Activated T-helper 2 cell treated with anti-CD3 and anti-CD28 coated beads, Interferon-gamma antibody, Interleukin-2, Interleukin-4, amounts not matched to agents 10 μg/mL and 5 μg/mL and 100 μg/mL, durations not matched to agents 14 hours and 24 hours and 36 hours (primary cell): ENCODE measurements at regions of chr5 and their contacts with region 1.

Region 1: DNA sequence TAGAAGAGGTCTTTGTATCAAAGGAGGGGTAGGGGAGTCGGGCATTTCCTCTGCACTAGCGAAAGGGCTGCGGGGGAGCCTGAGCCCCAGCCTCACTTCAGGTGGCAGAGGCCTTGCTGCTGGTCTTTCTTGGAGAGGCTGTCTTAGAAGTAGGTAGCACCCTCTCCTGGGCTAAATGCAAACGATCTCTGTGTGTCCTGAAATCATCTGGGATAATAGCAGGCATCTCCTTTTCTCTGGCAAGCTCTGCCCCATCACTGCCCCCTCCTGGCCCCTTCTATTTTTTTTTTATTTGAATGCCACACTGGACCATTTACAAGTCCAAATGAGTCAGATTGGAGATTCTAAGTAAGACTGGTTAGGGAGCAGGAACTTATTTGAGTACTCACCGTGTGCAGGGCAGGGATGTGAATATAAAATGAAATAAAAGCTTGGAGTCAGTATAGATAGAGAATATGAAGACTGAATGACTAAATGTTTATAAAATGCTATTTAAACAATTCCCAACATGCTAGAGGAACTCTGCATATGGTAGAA is 137.1 kb downstream of the FGF1 start:
- DNase-seq: no peak
- H3K4me3 Mint-ChIP-seq: no peak overlapping the region
- H3K27ac Mint-ChIP-seq: no peak overlapping the region
- H3K4me1 Mint-ChIP-seq: no peaks in the 10 kb centered on the region
- H3K27me3 Mint-ChIP-seq: peaks cover 44% of the 10 kb centered on the region

Region 2: DNA sequence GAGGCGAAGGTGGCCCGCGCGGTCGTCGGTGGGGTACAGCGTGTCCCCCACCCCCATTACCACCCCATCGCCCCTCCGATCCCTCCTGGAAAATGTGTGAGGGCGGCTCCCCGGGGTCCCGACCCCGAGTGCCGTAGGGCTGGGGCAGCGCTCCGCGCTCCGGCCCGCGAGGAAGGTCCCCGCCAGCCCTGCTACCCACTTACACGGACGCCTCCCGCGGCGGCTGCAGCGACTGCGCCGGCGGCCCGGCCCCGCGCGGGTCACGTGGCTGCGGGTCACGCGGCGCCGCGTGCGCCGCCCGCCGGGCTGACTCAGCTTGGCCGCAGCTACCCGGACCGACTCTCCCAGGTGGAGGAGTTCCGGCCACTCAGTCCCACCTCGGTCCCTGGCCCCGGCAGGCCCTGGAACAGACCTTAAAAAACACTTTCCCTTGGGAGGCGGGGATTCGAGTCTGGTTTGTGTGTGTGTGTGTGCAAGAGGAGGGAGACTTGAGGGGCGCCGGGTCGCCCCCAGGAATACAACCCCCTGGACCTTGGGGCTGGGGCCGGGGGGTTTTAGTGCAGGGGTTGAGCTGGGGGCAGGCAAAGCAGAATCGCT is 535.9 kb before region 1 on chr5 and contains the start of gene GNPDA1:
- intact Hi-C with region 1: no loop called
- DNase-seq: peak; percentile 61
- H3K4me3 Mint-ChIP-seq: peak within 1 kb of the TSS; percentile 81
- H3K27ac Mint-ChIP-seq: peak within 1 kb of the TSS; percentile 96
- H3K4me1 Mint-ChIP-seq: peaks cover 64% of the 10 kb centered on the region
- H3K27me3 Mint-ChIP-seq: no peaks in the 10 kb centered on the region
- total RNA-seq, gene GNPDA1: 35.8 and 43.7 TPM in 2 replicates

Region 3: DNA sequence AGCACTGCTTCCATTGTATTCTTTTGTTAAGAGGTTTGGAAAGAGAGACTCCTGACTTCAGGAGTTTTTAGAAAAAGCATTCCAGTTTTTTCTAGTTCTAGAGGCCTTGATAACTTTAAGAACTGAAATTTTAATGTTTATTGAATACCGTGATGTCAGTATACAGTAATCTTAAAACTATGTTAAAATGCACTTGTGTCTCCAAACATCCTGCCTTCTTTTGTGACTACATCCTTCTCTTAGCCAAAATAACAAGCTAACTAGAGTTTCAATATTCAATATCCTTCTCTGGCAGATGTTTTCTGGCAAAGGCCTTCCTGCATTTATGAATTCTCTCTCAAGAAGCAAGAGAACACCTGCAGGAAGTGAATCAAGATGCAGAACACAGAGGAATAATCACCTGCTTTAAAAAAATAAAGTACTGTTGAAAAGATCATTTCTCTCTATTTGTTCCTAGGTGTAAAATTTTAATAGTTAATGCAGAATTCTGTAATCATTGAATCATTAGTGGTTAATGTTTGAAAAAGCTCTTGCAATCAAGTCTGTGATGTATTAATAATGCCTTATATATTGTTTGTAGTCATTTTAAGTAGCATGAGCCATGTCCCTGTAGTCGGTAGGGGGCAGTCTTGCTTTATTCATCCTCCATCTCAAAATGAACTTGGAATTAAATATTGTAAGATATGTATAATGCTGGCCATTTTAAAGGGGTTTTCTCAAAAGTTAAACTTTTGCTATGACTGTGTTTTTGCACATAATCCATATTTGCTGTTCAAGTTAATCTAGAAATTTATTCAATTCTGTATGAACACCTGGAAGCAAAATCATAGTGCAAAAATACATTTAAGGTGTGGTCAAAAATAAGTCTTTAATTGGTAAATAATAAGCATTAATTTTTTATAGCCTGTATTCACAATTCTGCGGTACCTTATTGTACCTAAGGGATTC is 397.1 kb before region 1 on chr5:
- intact Hi-C with region 1: loop called (anchors 5 kb)
- DNase-seq: peak; percentile 17
- H3K4me3 Mint-ChIP-seq: no peak overlapping the region
- H3K27ac Mint-ChIP-seq: no peak overlapping the region
- H3K4me1 Mint-ChIP-seq: peaks cover 6% of the 10 kb centered on the region
- H3K27me3 Mint-ChIP-seq: no peaks in the 10 kb centered on the region